Panc1 (cell line): ENCODE measurements at regions of chr11 and their contacts with region 1.

Region 1: GRCh38 chr11:63838678-63839507 is at the start of gene MARK2:
- DNase-seq: peak; percentile 86
- ATAC-seq: peak; percentile 92
- H3K4me3 ChIP-seq: peak within 1 kb of the TSS; percentile 88 to 94
- H3K27ac ChIP-seq: peak within 1 kb of the TSS; percentile 88
- H3K4me1 ChIP-seq: peaks cover 20% of the 10 kb centered on the region
- H3K27me3 ChIP-seq: no peaks in the 10 kb centered on the region
- CTCF ChIP-seq: no peak
- total RNA-seq, gene MARK2: 41.1 TPM

Region 2: GRCh38 chr11:63768237-63769043 is 70.5 kb before region 1 on chr11 and contains the start of gene ZFTA:
- CTCF ChIA-PET with region 1: no interaction called
- POLR2A ChIA-PET with region 1: no interaction called
- in situ Hi-C with region 1: no loop called
- intact Hi-C with region 1: loop called (anchors 10 kb)
- DNase-seq: no peak
- ATAC-seq: peak; percentile 82
- H3K4me3 ChIP-seq: peak within 1 kb of the TSS; percentile 77 to 85
- H3K27ac ChIP-seq: peak within 1 kb of the TSS; percentile 79
- H3K4me1 ChIP-seq: peaks cover 15% of the 10 kb centered on the region
- H3K27me3 ChIP-seq: no peaks in the 10 kb centered on the region
- CTCF ChIP-seq: peak; percentile 97
- total RNA-seq, gene ZFTA: 16.1 TPM

Region 3: GRCh38 chr11:63945477-63946163 is 106.7 kb after region 1 on chr11:
- CTCF ChIA-PET with region 1: interaction called, 32 read pairs
- POLR2A ChIA-PET with region 1: interaction called, 8 read pairs
- in situ Hi-C with region 1: no loop called
- intact Hi-C with region 1: loop called (anchors 2 kb)
- DNase-seq: peak; percentile 48
- ATAC-seq: peak; percentile 96
- H3K4me3 ChIP-seq: no peak overlapping the region
- H3K27ac ChIP-seq: peak overlapping the region; percentile 41; the same call in 1 of the 2 replicates
- H3K4me1 ChIP-seq: peaks cover 14% of the 10 kb centered on the region
- H3K27me3 ChIP-seq: no peaks in the 10 kb centered on the region
- CTCF ChIP-seq: peak; percentile 81

Region 4: GRCh38 chr11:64152841-64153691 is 314.2 kb after region 1 on chr11:
- CTCF ChIA-PET with region 1: interaction called, 3 read pairs
- POLR2A ChIA-PET with region 1: no interaction called
- in situ Hi-C with region 1: no loop called
- intact Hi-C with region 1: loop called (anchors 10 kb)
- DNase-seq: no peak
- ATAC-seq: peak; percentile 91
- H3K4me3 ChIP-seq: no peak overlapping the region
- H3K27ac ChIP-seq: no peak overlapping the region
- H3K4me1 ChIP-seq: peaks cover 13% of the 10 kb centered on the region
- H3K27me3 ChIP-seq: no peaks in the 10 kb centered on the region
- CTCF ChIP-seq: peak; percentile 100